Naive thymus-derived CD4-positive, alpha-beta T cell (primary cell): ENCODE measurements at regions of chr7 and their contacts with region 1.

Region 1: DNA sequence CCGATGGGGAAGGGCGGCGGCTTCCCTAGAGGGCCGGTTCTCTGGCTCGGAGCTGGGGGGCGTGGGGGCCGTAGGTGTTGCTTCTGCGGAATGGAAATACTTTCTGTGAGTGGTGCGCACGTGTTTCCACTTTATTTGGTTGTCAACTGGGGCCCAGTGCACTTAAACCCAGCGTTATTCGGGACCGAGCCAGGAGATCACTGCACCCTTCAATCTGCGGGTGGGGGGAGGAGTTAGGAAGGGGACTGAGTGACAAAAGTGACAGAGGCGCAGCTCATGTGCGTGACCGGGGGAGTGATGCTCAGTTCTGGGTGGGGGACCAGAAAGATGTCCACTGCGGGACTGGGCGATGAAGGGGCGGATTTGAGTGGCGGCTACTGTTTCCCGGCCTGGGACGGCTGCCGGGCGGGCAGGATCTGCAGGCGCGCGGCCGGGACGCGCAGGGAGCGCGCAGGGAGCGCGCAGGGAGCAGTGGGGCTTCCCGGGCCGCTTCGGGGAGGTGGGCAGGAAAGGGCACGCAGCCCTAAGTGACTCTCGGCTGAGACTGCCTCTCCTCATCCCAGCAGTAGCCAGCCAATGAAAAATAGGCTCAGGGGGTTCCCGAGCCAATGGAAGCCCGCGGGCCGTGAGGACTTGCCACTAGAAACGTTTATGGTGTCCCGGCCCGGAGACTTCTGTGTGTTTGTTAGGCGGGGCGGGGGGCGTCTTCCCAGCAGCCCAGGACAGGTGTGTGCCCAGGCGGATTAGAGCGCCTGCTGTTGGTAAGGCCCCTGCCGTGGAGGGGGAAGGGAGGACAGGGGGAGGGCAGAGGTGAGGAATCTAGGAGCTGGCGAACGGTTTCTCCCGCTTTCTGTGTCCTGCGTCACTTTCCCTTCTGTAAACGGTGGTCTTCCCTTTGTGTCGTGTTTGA is 54.3 kb upstream of the KDM7A start:
- DNase-seq: peak; percentile 13 to 73 (median 44)
- ATAC-seq: peak; percentile 30
- H3K4me3 ChIP-seq: peak overlapping the region; percentile 95
- H3K4me3 Mint-ChIP-seq: peak overlapping the region; percentile 84 to 99 (median 96)
- H3K27ac ChIP-seq: peak overlapping the region; percentile 91
- H3K27ac Mint-ChIP-seq: peak overlapping the region; percentile 95 to 100 (median 99)
- H3K4me1 ChIP-seq: peaks cover 16 to 21% of the 10 kb centered on the region in 2 donors
- H3K4me1 Mint-ChIP-seq: peaks cover 24 to 56% (median 51%) of the 10 kb centered on the region in 7 donors
- H3K27me3 ChIP-seq: no peaks in the 10 kb centered on the region
- H3K27me3 Mint-ChIP-seq: peaks cover 0 to 2% (median 0%) of the 10 kb centered on the region in 5 donors

Region 2: DNA sequence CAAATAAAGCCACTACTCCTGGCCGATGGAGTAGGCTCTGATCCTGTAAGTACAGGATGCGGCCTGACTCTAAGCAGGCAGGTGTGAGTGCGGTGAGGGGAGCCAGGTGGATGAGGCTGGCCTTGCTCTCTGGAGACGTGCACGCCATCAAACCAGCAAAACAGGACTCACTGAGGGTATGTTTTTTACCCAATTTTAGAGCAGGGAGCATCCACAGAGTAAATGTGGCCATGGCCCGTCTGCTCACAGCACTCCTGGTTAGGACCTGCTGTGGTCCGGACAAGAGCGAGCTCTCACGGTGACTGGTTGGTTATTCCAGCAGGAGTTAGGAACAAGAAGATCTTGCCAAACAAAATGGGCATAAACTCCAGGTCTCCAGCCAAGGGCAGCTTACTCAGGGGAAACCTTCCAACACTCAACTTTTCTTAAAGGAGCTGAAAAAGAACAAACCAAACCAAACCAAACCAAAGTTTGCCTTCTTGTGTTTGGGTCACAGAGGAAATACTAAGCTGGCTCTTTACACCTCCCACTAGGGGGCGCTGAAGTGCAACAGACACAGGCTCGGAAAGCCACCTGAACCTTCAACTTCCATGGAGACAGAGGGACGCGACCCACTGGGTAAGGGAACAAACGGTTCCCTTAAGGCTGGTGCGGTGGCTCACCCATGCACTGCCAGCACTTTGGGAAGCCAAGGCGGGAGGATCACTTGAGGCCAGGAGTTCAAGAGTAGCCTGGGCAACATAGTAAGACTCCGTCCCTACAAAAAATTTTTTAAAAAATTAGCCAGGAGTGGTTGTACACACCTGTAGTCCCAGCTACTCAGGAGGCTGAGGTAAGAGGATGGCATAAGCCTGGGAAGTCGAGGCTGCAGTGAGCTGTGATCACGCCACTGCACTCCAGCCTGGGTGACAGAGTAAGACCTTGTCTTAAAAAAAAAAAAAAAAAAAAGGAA is 585.3 kb before region 1 on chr7:
- CTCF ChIA-PET with region 1: no interaction called
- POLR2A ChIA-PET with region 1: no interaction called
- intact Hi-C with region 1: loop called in 1 of 2 experiments (anchors 10 kb)
- DNase-seq: peak; percentile 72 to 93 (median 80)
- ATAC-seq: peak; percentile 73
- H3K4me3 ChIP-seq: no peak overlapping the region
- H3K4me3 Mint-ChIP-seq: peak overlapping the region in 8 of 10 donors; percentile 44 to 77 (median 61)
- H3K27ac ChIP-seq: no peak overlapping the region
- H3K27ac Mint-ChIP-seq: peak overlapping the region in 7 of 9 donors; percentile 46 to 92 (median 64)
- H3K4me1 ChIP-seq: peaks cover 0 to 78% of the 10 kb centered on the region in 2 donors
- H3K4me1 Mint-ChIP-seq: peaks cover 61 to 96% (median 87%) of the 10 kb centered on the region in 7 donors
- H3K27me3 ChIP-seq: no peaks in the 10 kb centered on the region
- H3K27me3 Mint-ChIP-seq: no peaks in the 10 kb centered on the region

Region 3: GRCh38 chr7:140062528-140063299 is 168.4 kb before region 1 on chr7 and contains the start of gene PARP12:
- CTCF ChIA-PET with region 1: no interaction called
- POLR2A ChIA-PET with region 1: interaction called, 6 read pairs
- intact Hi-C with region 1: loop called (anchors 1 kb)
- DNase-seq: peak; percentile 77 to 86 (median 83)
- ATAC-seq: peak; percentile 91
- H3K4me3 ChIP-seq: peak within 1 kb of the TSS; percentile 79
- H3K4me3 Mint-ChIP-seq: peak within 1 kb of the TSS; percentile 79 to 94 (median 90)
- H3K27ac ChIP-seq: peak within 1 kb of the TSS; percentile 81
- H3K27ac Mint-ChIP-seq: peak within 1 kb of the TSS; percentile 83 to 95 (median 92)
- H3K4me1 ChIP-seq: peaks cover 32 to 38% of the 10 kb centered on the region in 2 donors
- H3K4me1 Mint-ChIP-seq: peaks cover 34 to 55% (median 48%) of the 10 kb centered on the region in 7 donors
- H3K27me3 ChIP-seq: no peaks in the 10 kb centered on the region
- H3K27me3 Mint-ChIP-seq: peaks cover 0 to 7% (median 0%) of the 10 kb centered on the region in 5 donors
- total RNA-seq, gene PARP12: 66.2 to 145 (median 94.5) TPM

Region 4: GRCh38 chr7:140209866-140210609 is 21.1 kb before region 1 on chr7:
- CTCF ChIA-PET with region 1: interaction called, 4 read pairs
- POLR2A ChIA-PET with region 1: interaction called, 26 read pairs
- intact Hi-C with region 1: loop called (anchors 1 kb)
- DNase-seq: peak in 6 of 9 donors; percentile 24 to 58 (median 34)
- ATAC-seq: peak; percentile 86
- H3K4me3 ChIP-seq: peak overlapping the region; percentile 29
- H3K4me3 Mint-ChIP-seq: peak overlapping the region; percentile 10 to 82 (median 68)
- H3K27ac ChIP-seq: no peak overlapping the region
- H3K27ac Mint-ChIP-seq: peak overlapping the region; percentile 66 to 96 (median 87)
- H3K4me1 ChIP-seq: peaks cover 17 to 36% of the 10 kb centered on the region in 2 donors
- H3K4me1 Mint-ChIP-seq: peaks cover 37 to 82% (median 58%) of the 10 kb centered on the region in 7 donors
- H3K27me3 ChIP-seq: no peaks in the 10 kb centered on the region
- H3K27me3 Mint-ChIP-seq: no peaks in the 10 kb centered on the region

Region 5: GRCh38 chr7:140269004-140269638 is 38.0 kb after region 1 on chr7:
- CTCF ChIA-PET with region 1: interaction called, 3 read pairs
- POLR2A ChIA-PET with region 1: interaction called, 36 read pairs
- intact Hi-C with region 1: loop called in 1 of 2 experiments (anchors 1 kb)
- DNase-seq: peak in 7 of 9 donors; percentile 16 to 73 (median 58)
- ATAC-seq: peak; percentile 81
- H3K4me3 ChIP-seq: no peak overlapping the region
- H3K4me3 Mint-ChIP-seq: peak overlapping the region; percentile 20 to 73 (median 52)
- H3K27ac ChIP-seq: peak overlapping the region; percentile 8
- H3K27ac Mint-ChIP-seq: peak overlapping the region; percentile 53 to 95 (median 88)
- H3K4me1 ChIP-seq: peaks cover 5 to 12% of the 10 kb centered on the region in 2 donors
- H3K4me1 Mint-ChIP-seq: peaks cover 19 to 45% (median 27%) of the 10 kb centered on the region in 7 donors
- H3K27me3 ChIP-seq: no peaks in the 10 kb centered on the region
- H3K27me3 Mint-ChIP-seq: no peaks in the 10 kb centered on the region

Region 6: GRCh38 chr7:140326116-140326928 is 95.2 kb after region 1 on chr7:
- CTCF ChIA-PET with region 1: no interaction called
- POLR2A ChIA-PET with region 1: interaction called, 4 read pairs
- intact Hi-C with region 1: loop called in 1 of 2 experiments (anchors 1 kb)
- DNase-seq: peak; percentile 16 to 61 (median 54)
- ATAC-seq: peak; percentile 88
- H3K4me3 ChIP-seq: no peak overlapping the region
- H3K4me3 Mint-ChIP-seq: no peak overlapping the region
- H3K27ac ChIP-seq: no peak overlapping the region
- H3K27ac Mint-ChIP-seq: peak overlapping the region in 1 of 9 donors; percentile 76
- H3K4me1 ChIP-seq: peaks cover 4 to 5% of the 10 kb centered on the region in 2 donors
- H3K4me1 Mint-ChIP-seq: peaks cover 0 to 3% (median 0%) of the 10 kb centered on the region in 7 donors
- H3K27me3 ChIP-seq: no peaks in the 10 kb centered on the region
- H3K27me3 Mint-ChIP-seq: no peaks in the 10 kb centered on the region

Region 7: DNA sequence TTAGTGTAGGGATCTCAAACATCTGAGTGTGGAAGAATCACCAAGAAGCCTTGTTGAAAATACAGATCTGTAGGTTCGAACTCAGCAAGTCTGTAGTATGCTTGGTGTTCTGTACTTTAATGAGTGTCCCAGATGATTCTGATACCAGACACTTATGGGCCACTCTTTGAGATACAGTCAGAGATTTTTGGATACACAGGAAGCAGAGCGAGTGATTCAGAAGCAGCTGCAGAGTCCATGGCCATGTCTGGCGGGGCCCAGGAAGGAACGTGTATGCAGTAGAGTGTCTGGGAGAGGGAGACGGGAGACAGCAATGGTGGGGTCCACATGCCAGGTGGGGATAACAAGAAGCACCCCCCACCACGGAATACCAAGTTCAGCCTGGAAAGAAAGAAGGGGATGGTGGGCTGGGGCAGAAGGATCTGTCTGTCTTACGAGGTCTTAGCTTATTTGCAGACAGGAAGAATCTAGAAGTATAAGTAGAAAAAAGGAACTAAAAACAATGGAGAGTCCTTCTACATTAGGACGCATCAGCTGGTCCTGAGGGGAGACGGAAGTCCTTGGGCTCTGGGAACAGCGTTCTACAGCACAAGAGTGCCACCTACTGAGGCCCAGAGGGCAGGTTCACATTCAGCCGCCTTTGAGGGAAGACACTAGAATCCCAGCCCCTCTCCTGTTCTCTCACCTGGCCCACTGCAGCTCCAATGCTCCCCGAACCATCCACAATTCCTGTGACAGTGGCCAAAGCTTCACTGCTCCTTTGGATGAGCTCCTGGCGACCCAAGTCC is 111.8 kb after region 1 on chr7:
- CTCF ChIA-PET with region 1: no interaction called
- POLR2A ChIA-PET with region 1: no interaction called
- intact Hi-C with region 1: no loop called
- DNase-seq: no peak
- ATAC-seq: peak; percentile 88
- H3K4me3 ChIP-seq: no peak overlapping the region
- H3K4me3 Mint-ChIP-seq: no peak overlapping the region
- H3K27ac ChIP-seq: no peak overlapping the region
- H3K27ac Mint-ChIP-seq: no peak overlapping the region
- H3K4me1 ChIP-seq: no peaks in the 10 kb centered on the region
- H3K4me1 Mint-ChIP-seq: peaks cover 0 to 2% (median 0%) of the 10 kb centered on the region in 7 donors
- H3K27me3 ChIP-seq: no peaks in the 10 kb centered on the region
- H3K27me3 Mint-ChIP-seq: no peaks in the 10 kb centered on the region